Dorsolateral prefrontal cortex (tissue), 120 donors: ENCODE measurements at regions of chr11 and their contacts with region 1.

Region 1: GRCh38 chr11:11806586-11806985 is 35.2 kb upstream of the USP47 start:
- DNase-seq: no peak
- H3K4me3 ChIP-seq: peak overlapping the region in 19 of 59 donors; percentile 0 to 39 (median 8)
- H3K27ac ChIP-seq: peak overlapping the region; percentile 14 to 99 (median 92)
- H3K27me3 ChIP-seq: no peaks in the 10 kb centered on the region
- CTCF ChIP-seq: peak in 6 of 56 donors; percentile 5 to 26 (median 14)

Region 2: GRCh38 chr11:11787305-11788062 is 19.1 kb before region 1 on chr11:
- intact Hi-C with region 1: no loop called
- DNase-seq: peak; percentile 64 to 88 (median 78)
- H3K4me3 ChIP-seq: no peak overlapping the region
- H3K27ac ChIP-seq: no peak overlapping the region
- H3K27me3 ChIP-seq: no peaks in the 10 kb centered on the region
- CTCF ChIP-seq: peak; percentile 86 to 100 (median 94)

Region 3: GRCh38 chr11:11841723-11842420 is 35.3 kb after region 1 on chr11 and contains the start of gene USP47:
- intact Hi-C with region 1: loop called (anchors 2 kb)
- DNase-seq: peak; percentile 73 to 90 (median 86)
- H3K4me3 ChIP-seq: peak within 1 kb of the TSS; percentile 56 to 93 (median 82)
- H3K27ac ChIP-seq: peak within 1 kb of the TSS; percentile 89 to 100 (median 99)
- H3K27me3 ChIP-seq: no peaks in the 10 kb centered on the region
- CTCF ChIP-seq: peak in 54 of 56 donors; percentile 18 to 82 (median 66)
- total RNA-seq, gene USP47: 49.7 to 92.3 (median 69.2) TPM